ENCODE measurements at regions of chr4 and their contacts with region 1.

Region 1: DNA sequence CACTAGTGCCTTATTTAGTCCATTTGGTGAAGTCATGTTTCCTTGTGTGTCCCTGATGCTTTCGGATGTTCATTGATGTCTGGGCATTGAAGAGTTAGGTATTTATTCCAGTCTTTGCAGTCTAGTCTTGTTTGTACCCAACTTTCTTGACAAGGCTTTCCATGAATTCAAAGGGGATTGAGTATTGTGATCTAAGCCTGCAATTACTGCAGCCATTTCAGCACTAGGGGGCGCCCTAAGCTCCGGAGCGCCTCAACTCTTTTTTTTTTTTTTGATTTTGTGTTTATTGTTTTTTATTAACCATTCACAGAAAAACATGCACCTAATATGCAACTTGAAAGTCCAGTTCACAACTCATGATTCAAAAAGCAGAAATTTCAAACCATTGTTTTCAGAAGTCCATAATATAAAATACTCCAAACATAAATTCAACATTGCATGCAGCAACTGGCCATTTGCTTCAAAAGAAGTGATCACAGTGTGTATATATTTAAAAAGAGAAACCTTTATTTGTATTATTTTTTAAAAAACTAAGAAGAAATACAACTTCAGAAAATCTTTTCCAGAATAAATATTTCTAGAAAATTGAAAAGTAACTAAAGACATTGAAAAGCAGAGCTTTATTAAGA is 59.2 kb downstream of the PTPN13 start:
- DNase-seq: peak in 1 of 2 experiments; percentile 73
- H3K4me3 ChIP-seq: no peak overlapping the region
- H3K27ac ChIP-seq: no peak overlapping the region
- H3K4me1 ChIP-seq: no peaks in the 10 kb centered on the region
- H3K27me3 ChIP-seq: no peaks in the 10 kb centered on the region
- CTCF ChIP-seq: peak; percentile 40 to 66 (median 44)
- EP300 ChIP-seq: no peak
- POLR2A ChIP-seq: no peak
- RAD21 ChIP-seq: peak; percentile 51 to 56

Region 2: GRCh38 chr4:86557526-86557925 is 95.8 kb before region 1 on chr4:
- CTCF ChIA-PET with region 1: no interaction called
- POLR2A ChIA-PET with region 1: no interaction called
- DNase-seq: no peak
- H3K4me3 ChIP-seq: no peak overlapping the region
- H3K27ac ChIP-seq: no peak overlapping the region
- H3K4me1 ChIP-seq: no peaks in the 10 kb centered on the region
- H3K27me3 ChIP-seq: no peaks in the 10 kb centered on the region
- CTCF ChIP-seq: no peak
- EP300 ChIP-seq: no peak
- POLR2A ChIP-seq: no peak
- RAD21 ChIP-seq: no peak

Region 3: GRCh38 chr4:86641516-86642090 is 11.7 kb before region 1 on chr4:
- CTCF ChIA-PET with region 1: interaction called, 12 read pairs
- POLR2A ChIA-PET with region 1: no interaction called
- DNase-seq: no peak
- H3K4me3 ChIP-seq: no peak overlapping the region
- H3K27ac ChIP-seq: no peak overlapping the region
- H3K4me1 ChIP-seq: no peaks in the 10 kb centered on the region
- H3K27me3 ChIP-seq: no peaks in the 10 kb centered on the region
- CTCF ChIP-seq: no peak
- EP300 ChIP-seq: no peak
- POLR2A ChIP-seq: no peak
- RAD21 ChIP-seq: no peak

Region 4: DNA sequence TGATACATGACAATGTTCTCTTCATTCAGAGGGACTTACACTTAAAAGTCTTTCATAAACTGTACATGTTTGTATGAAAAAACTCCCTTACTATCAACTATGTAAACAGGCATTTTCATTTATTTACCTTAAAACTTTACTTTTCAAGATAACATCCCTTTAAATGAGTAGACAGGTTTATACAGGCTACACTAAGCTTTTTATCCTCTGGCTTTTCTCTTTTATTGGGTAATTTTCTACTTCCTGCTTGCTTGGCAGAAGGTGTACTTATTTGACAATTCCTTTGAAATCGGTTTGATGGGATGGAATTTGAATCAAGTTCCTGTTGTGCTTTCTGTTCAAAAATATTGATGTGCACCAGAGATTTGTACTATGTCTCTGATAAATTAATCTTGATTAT is 22.2 kb after region 1 on chr4:
- CTCF ChIA-PET with region 1: no interaction called
- POLR2A ChIA-PET with region 1: no interaction called
- DNase-seq: no peak
- H3K4me3 ChIP-seq: no peak overlapping the region
- H3K27ac ChIP-seq: no peak overlapping the region
- H3K4me1 ChIP-seq: no peaks in the 10 kb centered on the region
- H3K27me3 ChIP-seq: no peaks in the 10 kb centered on the region
- CTCF ChIP-seq: no peak
- EP300 ChIP-seq: no peak
- POLR2A ChIP-seq: no peak
- RAD21 ChIP-seq: no peak

Region 5: GRCh38 chr4:86685939-86686338 is 32.6 kb after region 1 on chr4:
- CTCF ChIA-PET with region 1: no interaction called
- POLR2A ChIA-PET with region 1: no interaction called
- DNase-seq: no peak
- H3K4me3 ChIP-seq: no peak overlapping the region
- H3K27ac ChIP-seq: no peak overlapping the region
- H3K4me1 ChIP-seq: peaks cover 0 to 2% (median 0%) of the 10 kb centered on the region in 4 experiments; a peak in 2 of 7 replicates
- H3K27me3 ChIP-seq: no peaks in the 10 kb centered on the region
- CTCF ChIP-seq: no peak
- EP300 ChIP-seq: no peak
- POLR2A ChIP-seq: no peak
- RAD21 ChIP-seq: no peak